ENCODE measurements at regions of chr11 and their contacts with region 1.

Region 1: GRCh38 chr11:10208131-10208575 is 85.9 kb downstream of the SBF2 start:
- DNase-seq: no peak
- H3K4me3 ChIP-seq: no peak overlapping the region
- H3K27me3 ChIP-seq: no peaks in the 10 kb centered on the region
- CTCF ChIP-seq: peak; percentile 66

Region 2: DNA sequence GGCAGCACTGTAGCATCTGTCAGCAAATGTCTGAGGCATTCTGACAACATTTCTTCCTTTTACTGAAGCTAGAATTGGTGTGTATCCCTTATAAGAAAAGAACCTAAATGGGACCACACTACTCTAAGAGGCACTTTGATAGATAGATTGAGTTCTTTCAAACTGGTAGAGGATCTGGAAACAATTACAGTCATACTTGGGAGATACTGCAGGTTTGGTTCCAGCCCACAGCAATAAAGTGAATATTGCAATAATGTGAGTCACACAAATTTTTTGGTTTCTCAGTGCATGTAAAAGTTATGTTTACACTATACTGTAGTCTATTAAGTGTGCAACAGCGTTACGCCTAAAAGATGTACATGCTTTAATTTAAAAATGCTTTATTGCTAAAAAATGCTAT is 11.1 kb before region 1 on chr11:
- CTCF ChIA-PET with region 1: interaction called, 14 read pairs
- POLR2A ChIA-PET with region 1: no interaction called
- DNase-seq: peak; percentile 59
- H3K4me3 ChIP-seq: no peak overlapping the region
- H3K27me3 ChIP-seq: no peaks in the 10 kb centered on the region
- CTCF ChIP-seq: no peak

Region 3: GRCh38 chr11:10255388-10256125 is 47.4 kb after region 1 on chr11:
- CTCF ChIA-PET with region 1: interaction called, 10 read pairs
- POLR2A ChIA-PET with region 1: no interaction called
- DNase-seq: no peak
- H3K4me3 ChIP-seq: no peak overlapping the region
- H3K27me3 ChIP-seq: no peaks in the 10 kb centered on the region
- CTCF ChIP-seq: no peak

Region 4: GRCh38 chr11:10275714-10276113 is 67.6 kb after region 1 on chr11:
- CTCF ChIA-PET with region 1: no interaction called
- POLR2A ChIA-PET with region 1: no interaction called
- DNase-seq: no peak
- H3K4me3 ChIP-seq: no peak overlapping the region
- H3K27me3 ChIP-seq: no peaks in the 10 kb centered on the region
- CTCF ChIP-seq: no peak

Region 5: DNA sequence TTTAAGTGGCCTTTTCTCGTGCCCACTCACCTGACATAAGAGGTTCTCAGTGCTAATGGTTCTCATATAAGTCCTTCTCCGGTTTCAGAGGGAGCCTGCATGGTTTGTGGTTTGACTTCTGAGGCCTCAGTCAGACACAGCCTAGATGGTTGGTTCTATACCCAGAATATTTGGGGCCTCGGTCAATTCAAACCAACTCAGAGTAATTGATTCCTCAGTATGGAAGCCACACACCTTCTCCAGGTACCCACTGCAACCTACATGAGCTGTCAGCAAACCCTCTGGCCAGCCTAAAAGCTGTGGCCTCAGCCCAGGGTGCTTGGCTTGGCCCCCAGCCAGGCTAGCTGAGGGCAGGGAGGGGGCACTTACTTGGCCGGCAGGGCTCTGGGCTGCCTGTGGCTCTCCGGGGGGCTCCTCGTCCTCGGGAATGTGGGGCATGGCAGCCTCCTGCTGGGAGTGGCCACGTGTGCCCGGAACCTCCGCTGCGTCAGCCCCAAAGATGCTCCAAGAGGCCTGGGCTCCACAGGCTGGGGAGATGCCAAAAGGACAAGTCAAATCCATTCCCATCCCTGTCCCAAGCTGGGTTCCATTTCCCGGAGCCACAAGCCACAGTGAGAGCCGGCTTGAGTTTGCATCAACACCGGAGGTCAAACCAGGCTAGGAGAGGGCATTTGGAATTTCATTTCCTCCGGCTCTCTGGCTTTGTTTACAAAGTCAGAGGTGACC is 443.7 kb after region 1 on chr11:
- CTCF ChIA-PET with region 1: no interaction called
- POLR2A ChIA-PET with region 1: no interaction called
- DNase-seq: no peak
- H3K4me3 ChIP-seq: no peak overlapping the region
- H3K27me3 ChIP-seq: no peaks in the 10 kb centered on the region
- CTCF ChIP-seq: no peak